Posterior vena cava (tissue), 2 donors: ENCODE measurements at regions of chr20 and their contacts with region 1.

Region 1: GRCh38 chr20:42260007-42260583 is 641.9 kb upstream of the CHD6 start:
- DNase-seq: no peak

Region 2: GRCh38 chr20:41865938-41866337 is 394.2 kb before region 1 on chr20:
- intact Hi-C with region 1: loop called in 1 of 2 experiments (anchors 2 kb)
- DNase-seq: no peak

Region 3: DNA sequence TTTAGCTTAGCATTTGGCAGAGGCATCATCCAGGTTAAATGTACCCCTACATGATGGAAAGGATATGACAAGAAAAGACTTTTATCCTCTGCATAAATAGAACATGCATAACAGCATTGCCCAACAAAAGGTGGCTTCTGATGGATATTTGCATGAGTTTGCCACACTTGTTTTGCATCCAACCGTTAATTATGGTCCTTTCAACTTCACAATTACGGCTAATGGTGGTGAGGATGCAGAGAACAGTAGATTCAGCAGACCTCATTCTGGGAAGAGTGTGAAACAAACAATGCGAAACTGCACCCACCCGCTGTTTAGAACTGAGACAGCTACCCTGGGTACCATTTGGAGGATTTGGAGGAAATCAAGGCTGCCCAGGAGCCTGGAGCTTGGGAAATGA is 49.0 kb after region 1 on chr20:
- intact Hi-C with region 1: no loop called
- DNase-seq: no peak